K562 (cell line): ENCODE measurements at regions of chr1 and their contacts with region 1.

Region 1: GRCh38 chr1:26744075-26744959 is 43.4 kb upstream of the PIGV start:
- DNase-seq: peak; percentile 59 to 97 (median 79)
- ATAC-seq: peak; percentile 99
- H3K4me3 ChIP-seq: no peak overlapping the region
- H3K27ac ChIP-seq: peak overlapping the region; percentile 82
- H3K4me1 ChIP-seq: peaks cover 13 to 27% of the 10 kb centered on the region in 2 experiments; a peak in 4 of 5 replicates
- H3K27me3 ChIP-seq: no peaks in the 10 kb centered on the region
- CTCF ChIP-seq: no peak; a peak in 1 of 6 replicates
- EP300 ChIP-seq: peak; percentile 86
- POLR2A ChIP-seq: no peak
- RAD21 ChIP-seq: peak; percentile 38 to 52

Region 2: DNA sequence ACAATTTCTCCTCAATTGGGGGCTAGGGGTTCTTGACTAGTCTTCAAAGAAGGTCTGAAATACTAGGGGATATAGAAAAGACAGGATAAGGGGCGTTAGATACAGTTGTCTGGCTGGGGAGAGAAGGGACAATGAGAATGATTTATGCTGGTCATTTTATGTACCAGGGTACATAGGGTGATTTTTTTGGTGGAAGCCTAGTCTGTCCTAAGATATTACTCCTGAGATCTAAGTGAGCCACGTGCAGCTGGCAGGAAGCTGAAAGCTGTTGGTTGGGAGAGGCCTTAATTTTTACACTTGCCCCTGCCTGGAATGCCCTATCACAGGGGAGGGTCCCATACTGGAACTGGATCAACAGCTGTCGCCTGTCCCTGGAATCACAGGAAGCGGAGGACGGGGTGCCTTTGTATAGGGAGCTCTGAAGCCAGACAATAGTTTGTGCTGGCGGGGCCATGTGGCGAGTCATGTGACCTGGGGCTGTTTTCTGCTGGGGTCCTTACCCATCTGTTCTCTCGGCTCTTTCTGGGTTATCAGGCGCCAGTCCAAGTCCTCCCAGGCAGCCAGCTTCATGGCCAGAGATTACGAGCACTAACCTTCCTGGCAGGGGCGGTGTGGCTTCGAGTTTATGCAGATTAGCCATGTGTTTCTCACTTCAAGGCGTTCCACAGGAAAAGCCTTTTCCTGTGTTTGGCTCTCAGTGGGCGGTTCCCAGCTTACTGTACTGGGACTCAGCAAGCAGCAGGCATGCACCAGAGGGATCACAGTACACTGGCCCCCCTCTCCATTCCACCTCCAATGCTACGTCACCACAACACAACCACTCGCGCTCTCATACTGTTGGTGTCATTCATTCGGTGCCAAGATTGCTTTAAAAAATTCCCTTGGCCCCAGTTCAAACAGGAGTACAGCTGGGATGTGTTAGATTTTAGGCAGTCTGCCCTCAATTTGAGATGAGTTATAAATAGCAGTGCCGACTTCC is 21.0 kb before region 1 on chr1:
- CTCF ChIA-PET with region 1: no interaction called
- POLR2A ChIA-PET with region 1: interaction called, 13 read pairs
- in situ Hi-C with region 1: no loop called
- intact Hi-C with region 1: no loop called
- DNase-seq: peak; percentile 84 to 99 (median 91)
- ATAC-seq: peak; percentile 90
- H3K4me3 ChIP-seq: peak overlapping the region; percentile 19; the same call in 1 of the 2 replicates
- H3K27ac ChIP-seq: peak overlapping the region; percentile 77
- H3K4me1 ChIP-seq: peaks cover 38 to 63% of the 10 kb centered on the region in 2 experiments
- H3K27me3 ChIP-seq: no peaks in the 10 kb centered on the region
- CTCF ChIP-seq: peak; percentile 5 to 31 (median 10); a peak in 2 of 6 replicates
- EP300 ChIP-seq: peak; percentile 69; the same call in 1 of the 2 replicates
- POLR2A ChIP-seq: no peak; the same call in 1 of the 2 replicates
- RAD21 ChIP-seq: peak in 1 of 2 experiments; percentile 43; a peak in 3 of 4 replicates

Region 3: DNA sequence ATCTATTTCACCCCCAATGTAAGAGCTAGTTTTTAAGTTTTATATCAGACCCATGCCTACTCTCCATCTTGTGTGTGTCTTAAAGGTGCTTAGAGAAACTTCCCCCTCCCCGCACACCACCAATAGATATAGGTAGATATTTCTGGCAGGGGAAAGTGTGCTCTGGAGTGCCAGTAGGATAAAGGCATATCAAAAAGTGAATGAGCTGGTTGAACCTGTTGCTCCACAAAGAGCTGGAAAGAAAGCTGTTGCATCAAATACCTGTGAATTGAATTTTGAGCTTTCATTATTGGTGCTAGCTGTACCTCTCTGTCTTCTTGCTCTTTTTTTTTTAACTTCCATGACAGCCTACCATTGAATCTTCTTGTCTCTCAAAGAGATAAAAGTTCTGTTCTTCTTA is 15.7 kb before region 1 on chr1:
- CTCF ChIA-PET with region 1: no interaction called
- POLR2A ChIA-PET with region 1: interaction called, 13 read pairs
- in situ Hi-C with region 1: no loop called
- intact Hi-C with region 1: no loop called
- DNase-seq: no peak
- ATAC-seq: no peak
- H3K4me3 ChIP-seq: no peak overlapping the region
- H3K27ac ChIP-seq: no peak overlapping the region
- H3K4me1 ChIP-seq: peaks cover 8 to 24% of the 10 kb centered on the region in 2 experiments
- H3K27me3 ChIP-seq: no peaks in the 10 kb centered on the region
- CTCF ChIP-seq: no peak
- EP300 ChIP-seq: no peak
- POLR2A ChIP-seq: no peak
- RAD21 ChIP-seq: no peak